Upper lobe of right lung (tissue), 1 donor: ENCODE measurements at regions of chr17 and their contacts with region 1.

Region 1: GRCh38 chr17:63919311-63919723 is 678 bp upstream of the GH1 start:
- DNase-seq: no peak
- ATAC-seq: peak; percentile 94
- H3K4me3 ChIP-seq: no peak overlapping the region
- H3K27ac ChIP-seq: no peak overlapping the region
- H3K4me1 ChIP-seq: peaks cover 4% of the 10 kb centered on the region
- H3K27me3 ChIP-seq: peaks cover 8% of the 10 kb centered on the region
- CTCF ChIP-seq: peak; percentile 95

Region 2: GRCh38 chr17:64025732-64026294 is 106.5 kb after region 1 on chr17:
- intact Hi-C with region 1: loop called (anchors 10 kb)
- DNase-seq: peak; percentile 90
- ATAC-seq: peak; percentile 94
- H3K4me3 ChIP-seq: peak overlapping the region; percentile 10
- H3K27ac ChIP-seq: peak overlapping the region; percentile 44
- H3K4me1 ChIP-seq: peaks cover 19% of the 10 kb centered on the region
- H3K27me3 ChIP-seq: no peaks in the 10 kb centered on the region
- CTCF ChIP-seq: peak; percentile 97

Region 3: DNA sequence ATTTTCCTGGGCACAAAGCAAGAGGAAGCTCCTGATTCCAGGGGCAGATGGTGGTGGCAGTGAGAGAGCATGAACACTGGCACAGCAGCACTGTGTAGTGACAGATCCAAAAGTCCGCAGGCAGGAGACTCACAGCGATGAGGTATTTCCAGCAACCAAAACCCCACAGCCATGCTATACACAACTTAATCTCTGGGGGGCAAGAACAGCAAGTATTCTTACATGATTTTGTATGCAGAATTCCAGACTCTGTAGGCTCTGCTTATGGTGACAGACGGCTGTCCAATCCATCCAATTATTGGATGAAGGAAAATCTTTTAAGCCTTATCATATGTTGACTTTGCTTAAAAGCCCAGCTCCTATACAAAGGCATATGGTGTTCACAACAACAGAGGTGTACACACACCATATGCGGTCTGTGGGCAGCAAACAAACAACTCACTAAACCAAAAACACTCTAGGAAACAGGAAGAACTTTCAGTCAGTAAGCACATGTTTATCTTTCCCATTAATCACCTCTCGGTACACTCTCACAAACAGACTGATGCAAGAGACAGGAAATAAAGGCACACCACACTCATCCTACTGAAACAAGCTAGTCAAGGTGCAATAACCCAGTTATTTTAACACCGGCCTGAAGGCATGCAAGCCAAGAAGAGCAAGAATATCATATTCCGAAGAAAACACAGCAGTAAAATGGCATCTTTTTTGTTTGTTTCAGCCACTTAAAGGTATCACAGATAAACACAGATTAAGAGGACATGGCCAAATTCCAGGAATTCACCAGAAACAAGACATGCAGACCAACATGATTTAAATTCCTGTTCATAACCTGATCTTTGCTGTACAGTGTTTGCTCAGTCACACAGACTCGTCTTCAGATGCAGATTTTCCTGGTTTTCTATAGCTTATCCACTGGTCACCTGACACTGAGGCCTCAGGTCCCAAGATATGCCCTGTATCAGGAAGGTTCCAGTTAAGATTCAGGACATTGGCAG is 162.8 kb after region 1 on chr17:
- intact Hi-C with region 1: no loop called
- DNase-seq: no peak
- ATAC-seq: peak; percentile 75
- H3K4me3 ChIP-seq: no peak overlapping the region
- H3K27ac ChIP-seq: peak overlapping the region; percentile 48
- H3K4me1 ChIP-seq: peaks cover 51% of the 10 kb centered on the region
- H3K27me3 ChIP-seq: no peaks in the 10 kb centered on the region
- CTCF ChIP-seq: peak; percentile 4

Region 4: GRCh38 chr17:64129764-64130558 is 210.6 kb after region 1 on chr17 and contains the start of gene ERN1:
- intact Hi-C with region 1: loop called (anchors 10 kb)
- DNase-seq: peak; percentile 98
- ATAC-seq: peak; percentile 97
- H3K4me3 ChIP-seq: peak within 1 kb of the TSS; percentile 75
- H3K27ac ChIP-seq: peak within 1 kb of the TSS; percentile 94
- H3K4me1 ChIP-seq: peaks cover 19% of the 10 kb centered on the region
- H3K27me3 ChIP-seq: no peaks in the 10 kb centered on the region
- CTCF ChIP-seq: no peak
- total RNA-seq, gene ERN1: 52.6 TPM